ENCODE measurements at regions of chr19 and their contacts with region 1.

Region 1: GRCh38 chr19:52748336-52748950 is 13.6 kb upstream of the ZNF611 start:
- DNase-seq: no peak
- H3K4me3 Mint-ChIP-seq: no peak overlapping the region
- H3K27ac Mint-ChIP-seq: no peak overlapping the region
- H3K4me1 Mint-ChIP-seq: peaks cover 3% of the 10 kb centered on the region
- H3K27me3 Mint-ChIP-seq: no peaks in the 10 kb centered on the region

Region 2: GRCh38 chr19:52248241-52248640 is 500.2 kb before region 1 on chr19:
- CTCF ChIA-PET with region 1: no interaction called
- POLR2A ChIA-PET with region 1: no interaction called
- intact Hi-C with region 1: loop called (anchors 5 kb)
- DNase-seq: peak; percentile 75
- H3K4me3 Mint-ChIP-seq: no peak overlapping the region
- H3K27ac Mint-ChIP-seq: no peak overlapping the region
- H3K4me1 Mint-ChIP-seq: no peaks in the 10 kb centered on the region
- H3K27me3 Mint-ChIP-seq: no peaks in the 10 kb centered on the region

Region 3: DNA sequence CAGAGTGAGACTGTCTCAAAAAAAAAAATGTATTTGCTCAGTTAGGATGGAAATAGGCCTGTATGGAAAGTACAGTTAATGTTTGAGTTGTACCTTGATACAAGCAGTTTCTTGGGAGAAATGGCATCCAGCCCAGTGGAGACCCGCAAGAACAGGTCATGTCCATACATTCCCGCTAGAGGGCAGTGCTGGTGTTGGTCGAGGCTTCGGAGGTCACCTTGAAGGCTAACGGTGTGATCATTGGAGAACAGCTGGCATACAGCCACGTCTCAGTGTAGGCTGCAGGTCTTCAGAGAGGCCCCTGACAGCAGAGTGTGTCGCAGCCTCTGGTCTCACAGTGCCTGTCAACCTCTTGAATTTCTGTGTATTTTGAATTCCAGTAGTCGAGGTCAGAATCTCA is 404.9 kb before region 1 on chr19:
- CTCF ChIA-PET with region 1: interaction called, 6 read pairs
- POLR2A ChIA-PET with region 1: no interaction called
- intact Hi-C with region 1: loop called (anchors 2 kb)
- DNase-seq: peak; percentile 70
- H3K4me3 Mint-ChIP-seq: no peak overlapping the region
- H3K27ac Mint-ChIP-seq: no peak overlapping the region
- H3K4me1 Mint-ChIP-seq: peaks cover 2% of the 10 kb centered on the region
- H3K27me3 Mint-ChIP-seq: no peaks in the 10 kb centered on the region

Region 4: DNA sequence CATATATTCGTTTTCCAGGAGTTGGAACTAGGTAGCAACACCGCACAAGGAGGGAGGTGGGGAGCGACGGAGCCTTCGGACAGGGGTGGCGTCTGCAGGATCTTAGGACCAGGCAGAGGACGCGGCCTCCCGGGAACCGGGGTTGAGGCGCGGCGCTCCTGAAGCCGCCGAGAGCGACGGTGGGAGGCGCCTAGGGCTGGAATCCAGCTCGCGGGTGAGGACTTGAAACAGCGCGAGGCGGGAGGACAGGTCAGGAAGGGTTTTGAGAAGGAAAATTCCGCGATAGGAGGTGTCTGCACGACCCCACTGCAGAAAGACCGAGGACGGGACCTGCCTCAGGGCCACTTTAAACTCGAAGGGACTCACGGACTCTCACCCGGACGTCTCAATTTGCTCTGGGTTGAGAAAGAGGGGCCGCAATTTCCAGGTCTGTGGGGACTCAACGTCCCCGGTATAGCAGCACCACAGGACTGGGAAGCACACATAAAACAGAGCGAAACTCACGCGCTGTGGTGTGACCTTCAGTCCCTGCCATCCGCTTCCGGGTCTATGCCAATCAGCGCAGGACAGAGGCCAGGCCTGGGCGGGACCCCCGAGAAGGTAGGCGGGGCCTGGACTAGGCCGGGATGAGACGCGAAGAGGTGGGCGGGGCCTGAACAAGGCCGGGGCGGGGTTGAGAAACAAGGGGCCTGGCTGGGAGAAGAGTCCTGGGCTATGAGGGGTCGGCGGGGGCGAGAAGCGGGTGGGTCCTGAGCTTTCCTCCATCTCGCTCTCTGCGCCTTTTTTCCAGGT is 148.9 kb after region 1 on chr19 and contains the start of gene ZNF320:
- CTCF ChIA-PET with region 1: no interaction called
- POLR2A ChIA-PET with region 1: no interaction called
- intact Hi-C with region 1: no loop called
- DNase-seq: peak; percentile 96
- H3K4me3 Mint-ChIP-seq: peak within 1 kb of the TSS; percentile 87
- H3K27ac Mint-ChIP-seq: peak within 1 kb of the TSS; percentile 88
- H3K4me1 Mint-ChIP-seq: peaks cover 11% of the 10 kb centered on the region
- H3K27me3 Mint-ChIP-seq: no peaks in the 10 kb centered on the region
- total RNA-seq, gene ZNF320: 5.4 to 7.0 TPM